ENCODE measurements at regions of chr17 and their contacts with region 1.

Region 1: DNA sequence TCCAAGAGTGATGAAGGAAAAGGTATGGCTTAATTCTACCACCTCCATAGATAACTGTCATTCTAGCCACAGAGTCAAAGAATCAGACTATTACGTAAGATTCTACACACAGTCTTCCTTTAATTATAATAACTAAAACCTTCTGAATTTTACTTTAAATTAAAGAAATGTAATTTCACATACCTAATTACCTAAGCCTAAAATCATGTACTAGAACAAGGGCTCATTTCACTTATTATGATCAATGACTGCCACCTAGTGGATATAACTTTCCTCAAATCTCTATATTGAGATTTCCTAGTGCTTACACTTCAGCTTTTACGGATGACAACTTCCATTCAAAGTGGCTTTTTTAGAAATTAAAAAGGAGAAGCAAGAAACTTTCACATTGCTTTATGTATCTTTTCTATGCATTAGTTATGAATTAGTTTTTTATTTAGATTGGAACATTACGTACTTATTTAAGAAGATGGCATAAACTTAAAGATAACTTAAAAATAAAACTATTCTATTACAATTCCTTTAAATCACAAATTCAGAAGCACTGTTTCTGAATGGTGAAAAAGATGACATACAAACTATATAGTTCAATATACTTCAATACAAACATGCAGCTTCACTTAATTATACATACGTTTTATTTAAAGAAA is 18.2 kb upstream of the ABCA10 start:
- DNase-seq: peak in 1 of 2 experiments; percentile 36
- H3K4me3 ChIP-seq: no peak overlapping the region
- H3K4me3 Mint-ChIP-seq: no peak overlapping the region
- H3K27ac Mint-ChIP-seq: no peak overlapping the region
- H3K4me1 ChIP-seq: no peaks in the 10 kb centered on the region
- H3K4me1 Mint-ChIP-seq: peaks cover 7% of the 10 kb centered on the region
- H3K27me3 ChIP-seq: no peaks in the 10 kb centered on the region
- H3K27me3 Mint-ChIP-seq: no peaks in the 10 kb centered on the region
- CTCF ChIP-seq: peak; percentile 40 to 56

Region 2: GRCh38 chr17:68468334-68468733 is 778.5 kb before region 1 on chr17:
- CTCF ChIA-PET with region 1: no interaction called
- POLR2A ChIA-PET with region 1: no interaction called
- intact Hi-C with region 1: loop called (anchors 5 kb)
- DNase-seq: no peak
- H3K4me3 ChIP-seq: no peak overlapping the region
- H3K4me3 Mint-ChIP-seq: no peak overlapping the region
- H3K27ac Mint-ChIP-seq: no peak overlapping the region
- H3K4me1 ChIP-seq: no peaks in the 10 kb centered on the region
- H3K4me1 Mint-ChIP-seq: no peaks in the 10 kb centered on the region
- H3K27me3 ChIP-seq: no peaks in the 10 kb centered on the region
- H3K27me3 Mint-ChIP-seq: peaks cover 2% of the 10 kb centered on the region
- CTCF ChIP-seq: no peak

Region 3: DNA sequence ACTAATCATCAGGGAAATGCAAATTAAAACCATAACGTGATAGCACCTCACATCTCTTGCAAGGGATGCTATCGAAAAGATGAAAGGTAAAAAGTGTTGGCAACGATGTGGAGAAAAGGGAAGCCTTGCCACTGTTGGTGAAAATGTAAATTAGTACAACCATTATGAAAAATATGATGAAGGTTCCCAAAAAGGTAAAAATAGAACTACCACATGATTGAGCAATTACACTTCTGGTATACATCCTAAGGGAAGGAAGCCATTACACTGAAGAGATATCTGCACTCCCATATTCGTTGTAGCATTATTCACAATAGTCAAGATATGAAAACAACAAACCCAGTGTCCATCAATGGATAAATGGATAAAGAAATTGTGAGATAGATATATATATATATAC is 39.7 kb before region 1 on chr17:
- CTCF ChIA-PET with region 1: no interaction called
- POLR2A ChIA-PET with region 1: no interaction called
- intact Hi-C with region 1: no loop called
- DNase-seq: no peak
- H3K4me3 ChIP-seq: no peak overlapping the region
- H3K4me3 Mint-ChIP-seq: no peak overlapping the region
- H3K27ac Mint-ChIP-seq: no peak overlapping the region
- H3K4me1 ChIP-seq: no peaks in the 10 kb centered on the region
- H3K4me1 Mint-ChIP-seq: no peaks in the 10 kb centered on the region
- H3K27me3 ChIP-seq: no peaks in the 10 kb centered on the region
- H3K27me3 Mint-ChIP-seq: peaks cover 2% of the 10 kb centered on the region
- CTCF ChIP-seq: no peak